ENCODE measurements at regions of chr1 and their contacts with region 1.

Region 1: DNA sequence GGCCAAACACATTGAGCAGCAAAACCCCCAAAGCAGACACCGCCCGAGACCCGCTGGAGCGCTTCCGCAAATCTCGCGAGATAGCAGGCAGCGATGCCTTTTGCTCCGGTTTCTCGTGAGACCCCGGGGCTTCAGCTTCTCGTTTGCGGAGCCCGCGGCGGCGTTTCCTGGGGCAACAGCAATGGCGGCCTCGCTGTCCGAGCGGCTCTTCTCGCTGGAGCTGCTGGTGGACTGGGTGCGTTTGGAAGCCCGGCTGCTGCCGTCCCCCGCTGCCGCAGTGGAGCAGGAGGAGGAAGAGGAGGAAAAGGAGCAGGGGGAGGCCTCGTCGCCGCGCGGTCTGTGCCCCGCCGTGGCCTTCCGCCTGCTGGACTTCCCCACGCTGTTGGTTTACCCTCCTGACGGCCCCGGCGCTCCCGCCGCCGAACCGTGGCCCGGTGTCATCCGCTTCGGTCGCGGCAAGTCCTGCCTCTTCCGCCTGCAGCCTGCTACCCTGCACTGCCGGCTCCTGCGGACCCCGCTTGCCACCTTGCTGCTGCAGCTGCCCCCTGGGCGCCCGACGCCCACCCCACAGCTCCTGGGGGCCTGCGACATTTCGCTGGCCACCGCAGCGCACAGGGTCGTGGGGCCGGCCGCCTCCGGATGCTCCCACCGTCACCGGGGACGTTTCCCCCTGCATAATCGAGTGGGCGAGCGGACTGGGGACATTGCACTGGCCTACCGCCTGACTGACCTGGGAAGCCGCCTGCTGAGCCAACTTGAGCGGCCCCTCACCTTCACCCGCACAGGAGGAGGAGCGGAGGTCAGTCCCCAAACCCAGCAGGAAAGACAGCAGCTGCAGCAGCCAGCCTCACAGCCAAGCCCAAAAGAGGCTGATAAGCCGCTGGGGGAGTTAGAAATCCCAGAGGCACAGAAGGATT is at the start of gene MAP10:
- DNase-seq: peak; percentile 78 to 90 (median 88)
- ATAC-seq: peak; percentile 85 to 92 (median 86)
- H3K4me3 ChIP-seq: peak within 1 kb of the TSS; percentile 50 to 93 (median 74)
- H3K27ac ChIP-seq: peak within 1 kb of the TSS; percentile 86 to 96 (median 92)
- H3K4me1 ChIP-seq: peaks cover 2 to 62% (median 25%) of the 10 kb centered on the region in 12 donors
- H3K27me3 ChIP-seq: no peaks in the 10 kb centered on the region
- CTCF ChIP-seq: no peak
- POLR2A ChIP-seq: peak in 1 of 2 donors; percentile 44
- total RNA-seq, gene MAP10: 2.4 to 4.9 (median 3.6) TPM

Region 2: GRCh38 chr1:232457595-232457994 is 347.9 kb before region 1 on chr1:
- intact Hi-C with region 1: loop called in 1 of 10 experiments (anchors 10 kb)
- DNase-seq: no peak
- ATAC-seq: no peak
- H3K4me3 ChIP-seq: no peak overlapping the region
- H3K27ac ChIP-seq: peak overlapping the region in 2 of 12 donors; percentile 3 to 11
- H3K4me1 ChIP-seq: peaks cover 0 to 45% (median 20%) of the 10 kb centered on the region in 12 donors
- H3K27me3 ChIP-seq: no peaks in the 10 kb centered on the region
- CTCF ChIP-seq: no peak
- POLR2A ChIP-seq: no peak

Region 3: GRCh38 chr1:232943679-232944252 is 138.2 kb after region 1 on chr1:
- intact Hi-C with region 1: loop called in 2 of 10 experiments (anchors 10 kb)
- DNase-seq: no peak
- ATAC-seq: peak in 1 of 4 donors; percentile 30
- H3K4me3 ChIP-seq: no peak overlapping the region
- H3K27ac ChIP-seq: no peak overlapping the region
- H3K4me1 ChIP-seq: peaks cover 0 to 10% (median 0%) of the 10 kb centered on the region in 12 donors
- H3K27me3 ChIP-seq: peaks cover 0 to 5% (median 0%) of the 10 kb centered on the region in 9 donors
- CTCF ChIP-seq: no peak
- POLR2A ChIP-seq: no peak

Region 4: DNA sequence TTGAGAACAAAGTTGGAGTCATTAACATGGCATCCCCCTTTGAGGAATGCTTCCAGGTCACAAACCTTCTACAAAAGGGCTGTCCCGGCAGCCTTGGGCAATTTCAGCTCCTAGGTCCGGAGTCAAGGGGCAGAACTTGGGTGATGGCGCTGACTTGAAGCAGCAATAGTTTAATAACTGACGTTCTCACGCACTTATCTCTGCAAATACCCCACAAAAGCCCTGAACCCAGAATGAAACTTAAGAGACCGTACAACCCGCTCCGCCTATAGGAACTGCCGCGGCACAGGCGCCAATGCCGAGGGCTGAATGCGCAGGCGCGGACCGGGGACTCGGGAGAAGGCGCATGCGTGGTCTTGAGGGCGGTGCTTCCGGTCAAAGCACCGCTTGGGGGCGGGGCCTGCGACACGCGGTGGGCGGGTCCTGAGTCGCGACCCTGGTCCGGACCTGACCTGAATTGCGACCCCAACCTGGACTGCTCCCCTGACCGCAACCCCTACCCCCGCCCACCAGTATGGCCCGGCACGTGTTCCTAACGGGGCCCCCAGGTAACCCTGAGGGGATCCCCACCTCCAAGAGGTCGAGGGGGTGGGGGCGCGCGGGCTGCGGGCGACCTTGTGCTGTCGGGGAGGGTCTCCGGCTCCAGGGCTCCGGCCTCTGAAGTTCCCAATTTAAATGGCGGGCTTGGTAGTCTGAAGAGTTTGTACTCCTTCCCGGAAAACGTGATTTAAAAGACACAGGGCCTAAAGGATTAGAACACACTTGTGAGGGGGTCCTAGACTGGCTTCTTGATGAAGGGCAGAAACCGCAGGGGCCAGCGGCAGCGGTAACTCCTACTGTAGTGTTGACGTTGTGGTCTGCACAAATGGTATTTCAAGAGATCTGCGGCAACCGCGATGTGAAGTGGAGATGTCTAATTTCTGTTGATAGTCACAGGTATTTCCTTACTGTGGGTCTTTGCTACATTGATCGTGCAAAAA is 145.0 kb after region 1 on chr1 and contains the start of gene NTPCR:
- intact Hi-C with region 1: loop called in 6 of 10 experiments (anchors 5 to 10 kb)
- DNase-seq: peak; percentile 94 to 98 (median 95)
- ATAC-seq: peak; percentile 94 to 98 (median 96)
- H3K4me3 ChIP-seq: peak within 1 kb of the TSS; percentile 40 to 100 (median 88)
- H3K27ac ChIP-seq: peak within 1 kb of the TSS; percentile 70 to 95 (median 88)
- H3K4me1 ChIP-seq: peaks cover 0 to 32% (median 21%) of the 10 kb centered on the region in 12 donors
- H3K27me3 ChIP-seq: peaks cover 0 to 5% (median 0%) of the 10 kb centered on the region in 9 donors
- CTCF ChIP-seq: peak in 7 of 12 donors; percentile 5 to 42 (median 28)
- POLR2A ChIP-seq: peak in 1 of 2 donors; percentile 65
- total RNA-seq, gene NTPCR: 29.6 to 62.9 (median 57.7) TPM

Region 5: DNA sequence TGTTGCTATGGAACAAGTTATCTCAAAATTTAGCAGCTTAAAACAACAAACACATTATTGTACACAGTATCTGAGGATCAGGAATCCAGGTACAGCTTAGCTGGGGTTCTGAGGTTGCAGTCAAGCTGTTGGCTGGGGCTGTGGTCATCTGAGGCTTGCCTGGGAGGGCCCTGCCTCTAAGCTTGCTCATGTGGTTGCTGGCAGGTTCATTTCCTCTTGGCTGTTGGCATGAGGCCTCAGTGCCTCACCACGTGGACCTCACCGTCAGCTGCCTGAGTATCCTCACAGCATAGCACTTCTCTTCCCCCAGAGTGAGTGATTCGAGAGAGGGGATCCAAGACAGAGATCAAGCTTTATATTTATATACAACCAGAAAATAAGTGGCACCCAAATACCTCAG is 163.4 kb after region 1 on chr1:
- intact Hi-C with region 1: loop called in 1 of 10 experiments (anchors 10 kb)
- DNase-seq: peak in 3 of 5 donors; percentile 51 to 79 (median 65)
- ATAC-seq: peak in 3 of 4 donors; percentile 83 to 89 (median 87)
- H3K4me3 ChIP-seq: no peak overlapping the region
- H3K27ac ChIP-seq: peak overlapping the region in 1 of 12 donors; percentile 2
- H3K4me1 ChIP-seq: peaks cover 0 to 49% (median 20%) of the 10 kb centered on the region in 12 donors
- H3K27me3 ChIP-seq: no peaks in the 10 kb centered on the region
- CTCF ChIP-seq: no peak
- POLR2A ChIP-seq: no peak